ENCODE measurements at regions of chr11 and their contacts with region 1.

Region 1: GRCh38 chr11:102139081-102139498 is 28.8 kb downstream of the YAP1 start:
- DNase-seq: no peak
- ATAC-seq: no peak
- H3K4me3 ChIP-seq: no peak overlapping the region
- H3K4me3 Mint-ChIP-seq: no peak overlapping the region
- H3K27ac ChIP-seq: no peak overlapping the region
- H3K27ac Mint-ChIP-seq: no peak overlapping the region
- H3K4me1 ChIP-seq: no peaks in the 10 kb centered on the region
- H3K4me1 Mint-ChIP-seq: no peaks in the 10 kb centered on the region
- H3K27me3 ChIP-seq: no peaks in the 10 kb centered on the region
- H3K27me3 Mint-ChIP-seq: peaks cover 22% of the 10 kb centered on the region
- CTCF ChIP-seq: no peak

Region 2: GRCh38 chr11:102197670-102198139 is 58.6 kb after region 1 on chr11:
- CTCF ChIA-PET with region 1: no interaction called
- POLR2A ChIA-PET with region 1: no interaction called
- intact Hi-C with region 1: loop called in 1 of 2 experiments (anchors 10 kb)
- DNase-seq: no peak
- ATAC-seq: no peak
- H3K4me3 ChIP-seq: no peak overlapping the region
- H3K4me3 Mint-ChIP-seq: no peak overlapping the region
- H3K27ac ChIP-seq: no peak overlapping the region
- H3K27ac Mint-ChIP-seq: no peak overlapping the region
- H3K4me1 ChIP-seq: no peaks in the 10 kb centered on the region
- H3K4me1 Mint-ChIP-seq: no peaks in the 10 kb centered on the region
- H3K27me3 ChIP-seq: no peaks in the 10 kb centered on the region
- H3K27me3 Mint-ChIP-seq: peaks cover 16% of the 10 kb centered on the region
- CTCF ChIP-seq: no peak

Measured in CD8-positive, alpha-beta T cell (primary cell).